Activated T-helper 1 cell treated with anti-CD3 and anti-CD28 coated beads, Interleukin-12 subunit alpha, Interleukin-12 subunit beta, Interleukin-2, Interleukin-4 antibody, amounts not matched to agents 30 ng/mL and 10 ng/mL and 1 ng/mL, durations not matched to agents 14 hours and 24 hours and 36 hours (primary cell): ENCODE measurements at regions of chr3 and their contacts with region 1.

Region 1: DNA sequence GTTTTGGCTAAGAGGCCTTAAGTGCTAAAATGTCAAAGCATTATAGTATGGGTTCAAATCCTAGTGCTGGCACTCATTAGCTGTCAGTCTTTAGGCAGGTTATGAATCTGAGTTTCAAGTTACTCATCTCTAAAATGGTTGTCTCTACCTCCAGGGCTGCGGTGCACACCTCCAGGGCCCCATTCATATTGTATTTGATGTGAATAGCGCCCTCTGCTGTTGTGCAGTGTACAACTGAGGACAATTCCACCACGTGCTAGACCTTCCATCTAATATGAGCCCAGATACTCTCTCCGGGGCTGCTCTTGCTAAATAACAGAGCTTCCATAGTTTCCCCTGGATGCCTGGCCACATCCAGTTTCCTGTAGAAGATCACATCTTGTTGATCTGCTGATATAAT is 54.3 kb downstream of the OXNAD1 start:
- DNase-seq: peak; percentile 74
- H3K4me3 Mint-ChIP-seq: peak overlapping the region; percentile 6
- H3K27ac Mint-ChIP-seq: peak overlapping the region; percentile 89
- H3K4me1 Mint-ChIP-seq: peaks cover 71% of the 10 kb centered on the region
- H3K27me3 Mint-ChIP-seq: no peaks in the 10 kb centered on the region

Region 2: DNA sequence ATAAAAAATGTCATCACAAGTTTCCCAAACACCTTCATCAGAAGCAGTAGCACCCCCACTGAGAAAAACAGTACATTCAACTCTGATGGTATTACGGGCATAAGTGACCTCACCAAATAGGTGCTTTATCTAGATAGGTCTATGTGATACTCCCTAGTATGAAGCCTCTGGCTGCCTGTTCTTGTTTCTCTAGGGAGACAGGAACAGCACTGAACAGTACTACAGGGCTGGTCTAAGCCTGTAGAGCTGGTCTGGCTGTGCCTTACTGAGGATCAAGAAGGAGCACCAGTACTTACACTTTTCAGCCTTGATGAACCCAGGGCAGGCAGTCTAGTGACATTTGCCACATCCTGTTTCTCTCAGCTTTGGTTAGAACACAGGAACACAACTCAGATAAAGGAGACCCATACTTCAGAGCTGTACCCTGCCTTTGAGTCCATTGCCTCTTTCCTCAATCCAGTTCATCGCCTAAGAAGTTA is 18.4 kb before region 1 on chr3:
- intact Hi-C with region 1: loop called (anchors 2 kb)
- DNase-seq: peak; percentile 63
- H3K4me3 Mint-ChIP-seq: peak overlapping the region; percentile 87
- H3K27ac Mint-ChIP-seq: peak overlapping the region; percentile 95
- H3K4me1 Mint-ChIP-seq: peaks cover 96% of the 10 kb centered on the region
- H3K27me3 Mint-ChIP-seq: no peaks in the 10 kb centered on the region